HepG2 (cell line): ENCODE measurements at regions of chr15 and their contacts with region 1.

Region 1: GRCh38 chr15:74781431-74782258 is at the start of gene CSK:
- DNase-seq: no peak
- ATAC-seq: peak; percentile 4
- H3K4me3 ChIP-seq: peak within 1 kb of the TSS; percentile 66 to 84 (median 69)
- H3K27ac ChIP-seq: peak within 1 kb of the TSS; percentile 45
- H3K4me1 ChIP-seq: peaks cover 79% of the 10 kb centered on the region
- H3K27me3 ChIP-seq: no peaks in the 10 kb centered on the region
- CTCF ChIP-seq: peak; percentile 57
- EP300 ChIP-seq: no peak
- POLR2A ChIP-seq: peak in 1 of 2 experiments; percentile 62; a peak in 2 of 4 replicates
- RAD21 ChIP-seq: 0 out of 2 replicates have a peak, but pooled peaks have one; percentile 25
- total RNA-seq, gene CSK: 20.6 and 21.3 TPM in 2 replicates

Region 2: DNA sequence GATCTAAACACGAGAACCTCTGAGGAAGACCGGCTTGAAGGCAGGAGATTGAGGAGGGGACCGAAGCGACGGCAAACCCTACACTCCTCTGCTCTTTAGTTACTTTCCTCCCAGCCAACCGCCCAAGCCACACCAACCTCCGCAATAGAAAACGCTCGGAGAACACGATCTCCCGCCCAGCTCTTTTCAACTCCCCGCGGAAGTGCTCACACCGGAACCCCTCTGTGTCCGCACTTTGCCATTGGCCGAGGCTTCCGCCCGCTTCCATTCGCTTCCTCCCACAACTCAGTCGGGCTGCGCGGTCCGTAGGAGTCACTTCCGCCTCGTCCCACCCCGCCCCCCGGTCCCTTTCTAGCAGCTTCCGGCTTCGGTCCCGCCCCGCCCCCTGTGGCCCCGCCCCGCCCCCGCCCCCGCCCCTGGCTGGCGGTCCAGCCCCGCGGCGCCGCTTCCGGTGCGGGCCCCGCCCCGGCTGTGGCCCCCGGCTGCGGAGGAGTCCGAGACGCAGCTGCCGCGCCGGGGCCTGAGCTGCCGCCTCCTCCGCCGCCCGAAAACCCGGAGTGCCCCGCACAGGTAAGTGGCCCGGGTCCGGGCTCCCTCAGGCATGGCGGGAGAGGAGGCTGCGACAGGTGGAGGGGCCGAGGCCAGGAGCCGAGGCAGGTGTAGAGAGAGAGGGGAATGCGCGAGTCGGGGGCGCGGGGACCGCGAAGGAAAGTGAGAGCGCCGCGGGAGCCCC is 240.7 kb before region 1 on chr15 and contains the start of gene ARID3B:
- CTCF ChIA-PET with region 1: no interaction called
- POLR2A ChIA-PET with region 1: no interaction called
- in situ Hi-C with region 1: loop called (anchors 10 kb)
- intact Hi-C with region 1: no loop called
- DNase-seq: peak; percentile 94
- ATAC-seq: peak; percentile 99
- H3K4me3 ChIP-seq: peak within 1 kb of the TSS; percentile 97 to 99 (median 98)
- H3K27ac ChIP-seq: peak within 1 kb of the TSS; percentile 80
- H3K4me1 ChIP-seq: peaks cover 37% of the 10 kb centered on the region
- H3K27me3 ChIP-seq: no peaks in the 10 kb centered on the region; a peak in 1 of 5 replicates
- CTCF ChIP-seq: no peak
- EP300 ChIP-seq: no peak
- POLR2A ChIP-seq: peak; percentile 68 to 92
- RAD21 ChIP-seq: peak; percentile 6; the same call in 1 of the 2 replicates
- total RNA-seq, gene ARID3B: 5.3 and 7.0 TPM in 2 replicates

Region 3: GRCh38 chr15:74664028-74664616 is 117.5 kb before region 1 on chr15:
- CTCF ChIA-PET with region 1: no interaction called
- POLR2A ChIA-PET with region 1: no interaction called
- in situ Hi-C with region 1: no loop called
- intact Hi-C with region 1: no loop called
- DNase-seq: peak; percentile 20
- ATAC-seq: peak; percentile 75
- H3K4me3 ChIP-seq: no peak overlapping the region
- H3K27ac ChIP-seq: peak overlapping the region; percentile 43
- H3K4me1 ChIP-seq: peaks cover 21% of the 10 kb centered on the region
- H3K27me3 ChIP-seq: no peaks in the 10 kb centered on the region
- CTCF ChIP-seq: no peak
- EP300 ChIP-seq: no peak
- POLR2A ChIP-seq: no peak
- RAD21 ChIP-seq: no peak

Region 4: DNA sequence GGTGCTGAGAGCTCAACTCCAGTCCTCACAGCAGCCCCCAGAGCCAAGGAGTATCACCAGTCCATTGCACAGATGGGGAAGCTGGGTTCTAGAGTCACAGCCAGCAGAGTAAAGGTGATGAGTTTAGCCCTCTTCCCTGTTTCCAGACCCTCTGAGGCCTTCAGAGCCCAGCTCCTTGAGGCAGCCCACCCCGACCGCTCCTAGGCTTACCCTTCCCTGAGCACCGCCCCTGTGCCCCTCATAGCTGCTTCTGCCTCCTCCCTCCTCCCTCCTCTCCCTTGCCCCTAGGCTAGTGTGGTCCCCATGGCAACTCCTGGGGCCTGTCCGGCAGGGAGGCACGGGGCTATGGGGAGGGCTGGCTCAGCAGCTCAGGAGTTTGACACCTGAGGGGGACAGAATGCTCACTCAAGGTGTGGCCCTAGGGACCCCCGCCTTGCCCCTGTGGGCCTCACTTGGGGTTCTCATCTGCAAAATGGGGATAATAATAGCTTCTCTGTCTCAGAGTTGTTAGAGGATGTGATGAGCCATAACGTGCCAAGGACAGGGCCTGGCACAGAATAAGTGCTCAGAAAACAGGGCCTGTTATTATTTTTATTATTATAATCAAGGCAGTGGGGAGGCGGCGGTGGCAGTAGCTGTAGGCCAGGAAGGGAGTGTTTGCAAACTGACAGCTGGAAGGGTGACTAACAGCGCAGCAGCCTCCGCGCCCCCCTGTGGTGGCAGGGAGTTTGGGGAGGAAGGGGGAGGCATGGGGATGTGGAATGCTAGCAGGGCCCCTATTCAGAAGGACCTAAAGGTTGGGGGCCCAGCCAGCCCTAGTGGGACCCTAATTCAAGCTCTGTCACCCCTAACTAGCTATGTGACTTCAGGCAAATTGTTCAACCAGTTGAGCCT is 11.7 kb after region 1 on chr15:
- CTCF ChIA-PET with region 1: no interaction called
- POLR2A ChIA-PET with region 1: interaction called, 13 read pairs
- in situ Hi-C with region 1: no loop called
- intact Hi-C with region 1: no loop called
- DNase-seq: no peak
- ATAC-seq: no peak
- H3K4me3 ChIP-seq: no peak overlapping the region
- H3K27ac ChIP-seq: no peak overlapping the region
- H3K4me1 ChIP-seq: peaks cover 15% of the 10 kb centered on the region
- H3K27me3 ChIP-seq: no peaks in the 10 kb centered on the region
- CTCF ChIP-seq: no peak
- EP300 ChIP-seq: no peak
- POLR2A ChIP-seq: no peak
- RAD21 ChIP-seq: no peak

Region 5: DNA sequence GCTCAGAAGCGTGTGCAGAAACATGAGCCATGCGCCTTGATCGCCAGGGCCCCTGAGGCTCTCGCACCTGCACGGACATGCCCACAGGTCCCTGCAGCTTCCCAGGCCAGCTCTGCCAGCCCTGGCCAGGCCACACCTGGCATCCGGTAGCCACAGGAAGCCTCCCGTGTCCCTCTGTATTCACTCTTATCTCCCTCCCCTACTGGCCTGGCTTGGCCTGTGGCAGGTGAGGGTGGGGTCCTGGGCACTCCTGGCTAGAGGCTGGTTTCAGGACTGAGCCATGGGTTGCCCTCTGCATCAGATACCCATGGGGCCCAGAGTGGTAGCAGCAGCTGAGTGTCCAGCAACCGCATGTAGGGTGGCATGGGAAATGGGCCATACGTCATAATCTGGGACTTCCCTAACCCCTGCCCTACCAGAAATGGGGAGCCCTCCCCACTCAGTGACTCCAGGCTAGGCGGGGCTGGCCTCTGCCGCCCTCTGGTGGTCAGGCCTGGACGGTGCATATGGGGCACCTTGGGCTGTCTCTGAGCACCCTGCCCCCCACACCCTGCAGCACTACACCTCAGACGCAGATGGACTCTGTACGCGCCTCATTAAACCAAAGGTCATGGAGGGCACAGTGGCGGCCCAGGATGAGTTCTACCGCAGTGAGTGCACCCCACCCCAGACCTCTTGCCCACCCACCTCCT is 18.4 kb after region 1 on chr15:
- CTCF ChIA-PET with region 1: interaction called, 6 read pairs
- POLR2A ChIA-PET with region 1: interaction called, 13 read pairs
- in situ Hi-C with region 1: no loop called
- intact Hi-C with region 1: loop called (anchors 2 kb)
- DNase-seq: peak; percentile 43
- ATAC-seq: peak; percentile 92
- H3K4me3 ChIP-seq: no peak overlapping the region
- H3K27ac ChIP-seq: no peak overlapping the region
- H3K4me1 ChIP-seq: peaks cover 13% of the 10 kb centered on the region
- H3K27me3 ChIP-seq: no peaks in the 10 kb centered on the region
- CTCF ChIP-seq: peak; percentile 97
- EP300 ChIP-seq: no peak
- POLR2A ChIP-seq: no peak; a peak in 1 of 4 replicates
- RAD21 ChIP-seq: peak; percentile 96

Region 6: DNA sequence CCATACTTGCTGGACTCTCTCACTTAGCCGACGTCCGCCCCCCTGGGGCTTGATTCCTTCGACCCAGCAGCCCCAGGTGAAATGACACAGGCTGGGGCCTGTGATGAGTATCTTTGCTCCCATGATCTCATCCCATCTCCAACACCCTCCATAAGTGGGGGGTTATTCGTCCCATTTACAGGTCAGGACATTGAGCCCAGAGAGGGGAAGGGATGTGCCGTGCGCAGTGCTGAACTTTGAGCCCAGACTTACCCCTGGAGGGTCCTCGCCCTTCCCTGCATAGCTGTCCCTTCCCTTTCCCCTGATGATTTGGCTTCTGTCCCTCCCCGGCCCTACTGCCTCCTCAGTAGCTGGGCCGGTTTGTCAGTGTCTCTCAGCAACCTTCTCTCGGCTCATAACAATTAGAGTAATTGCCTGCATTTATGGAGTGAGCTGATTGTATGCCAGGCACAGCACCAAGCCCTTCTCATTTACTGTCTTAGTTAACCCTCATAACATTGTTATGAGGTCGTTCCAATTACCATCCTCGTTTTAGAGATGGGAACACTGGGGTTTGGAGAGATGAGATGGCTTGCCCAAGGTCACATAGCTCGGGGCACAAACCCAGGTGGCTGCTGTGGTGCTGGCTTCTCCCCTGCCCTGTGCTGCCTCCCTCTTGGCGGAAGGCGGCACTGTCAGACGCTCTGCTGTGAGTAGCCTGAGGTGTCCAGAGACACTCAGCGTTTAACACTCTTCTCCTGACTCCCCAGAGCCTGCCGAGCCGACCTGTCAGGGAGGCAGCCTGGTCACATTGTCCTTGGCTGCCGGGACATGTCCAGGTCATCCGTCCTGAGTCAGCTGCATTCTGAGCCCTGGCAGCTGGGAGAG is 35.4 kb after region 1 on chr15:
- CTCF ChIA-PET with region 1: no interaction called
- POLR2A ChIA-PET with region 1: interaction called, 3 read pairs
- in situ Hi-C with region 1: no loop called
- intact Hi-C with region 1: loop called (anchors 5 kb)
- DNase-seq: peak; percentile 56
- ATAC-seq: peak; percentile 84
- H3K4me3 ChIP-seq: peak overlapping the region in 1 of 3 experiments; percentile 35; a peak in 1 of 6 replicates
- H3K27ac ChIP-seq: no peak overlapping the region
- H3K4me1 ChIP-seq: peaks cover 40% of the 10 kb centered on the region
- H3K27me3 ChIP-seq: peaks cover 1 to 8% of the 10 kb centered on the region in 2 experiments; a peak in 2 of 5 replicates
- CTCF ChIP-seq: peak; percentile 82
- EP300 ChIP-seq: no peak
- POLR2A ChIP-seq: no peak
- RAD21 ChIP-seq: peak; percentile 46; the same call in 1 of the 2 replicates

Region 7: GRCh38 chr15:74835307-74835823 is 53.7 kb after region 1 on chr15:
- CTCF ChIA-PET with region 1: no interaction called
- POLR2A ChIA-PET with region 1: no interaction called
- in situ Hi-C with region 1: no loop called
- intact Hi-C with region 1: loop called (anchors 2 kb)
- DNase-seq: peak; percentile 70
- ATAC-seq: peak; percentile 86
- H3K4me3 ChIP-seq: no peak overlapping the region
- H3K27ac ChIP-seq: no peak overlapping the region
- H3K4me1 ChIP-seq: peaks cover 30% of the 10 kb centered on the region
- H3K27me3 ChIP-seq: peaks cover 0 to 11% of the 10 kb centered on the region in 2 experiments; a peak in 2 of 5 replicates
- CTCF ChIP-seq: peak; percentile 82
- EP300 ChIP-seq: no peak
- POLR2A ChIP-seq: no peak
- RAD21 ChIP-seq: peak; percentile 59

Region 8: GRCh38 chr15:74873036-74873755 is 91.6 kb after region 1 on chr15 and contains the start of gene SCAMP2:
- CTCF ChIA-PET with region 1: no interaction called
- POLR2A ChIA-PET with region 1: no interaction called
- in situ Hi-C with region 1: no loop called
- intact Hi-C with region 1: no loop called
- DNase-seq: peak; percentile 91
- ATAC-seq: peak; percentile 98
- H3K4me3 ChIP-seq: peak within 1 kb of the TSS; percentile 83 to 98 (median 98)
- H3K27ac ChIP-seq: peak within 1 kb of the TSS; percentile 93
- H3K4me1 ChIP-seq: peaks cover 48% of the 10 kb centered on the region
- H3K27me3 ChIP-seq: peaks cover 0 to 10% of the 10 kb centered on the region in 2 experiments; a peak in 1 of 5 replicates
- CTCF ChIP-seq: no peak
- EP300 ChIP-seq: 0 out of 4 replicates have a peak, but pooled peaks of 1 of the 2 experiments have one; percentile 40
- POLR2A ChIP-seq: peak; percentile 92 to 93
- RAD21 ChIP-seq: peak; percentile 27; the same call in 1 of the 2 replicates
- total RNA-seq, gene SCAMP2: 23.6 and 34.8 TPM in 2 replicates

Region 9: DNA sequence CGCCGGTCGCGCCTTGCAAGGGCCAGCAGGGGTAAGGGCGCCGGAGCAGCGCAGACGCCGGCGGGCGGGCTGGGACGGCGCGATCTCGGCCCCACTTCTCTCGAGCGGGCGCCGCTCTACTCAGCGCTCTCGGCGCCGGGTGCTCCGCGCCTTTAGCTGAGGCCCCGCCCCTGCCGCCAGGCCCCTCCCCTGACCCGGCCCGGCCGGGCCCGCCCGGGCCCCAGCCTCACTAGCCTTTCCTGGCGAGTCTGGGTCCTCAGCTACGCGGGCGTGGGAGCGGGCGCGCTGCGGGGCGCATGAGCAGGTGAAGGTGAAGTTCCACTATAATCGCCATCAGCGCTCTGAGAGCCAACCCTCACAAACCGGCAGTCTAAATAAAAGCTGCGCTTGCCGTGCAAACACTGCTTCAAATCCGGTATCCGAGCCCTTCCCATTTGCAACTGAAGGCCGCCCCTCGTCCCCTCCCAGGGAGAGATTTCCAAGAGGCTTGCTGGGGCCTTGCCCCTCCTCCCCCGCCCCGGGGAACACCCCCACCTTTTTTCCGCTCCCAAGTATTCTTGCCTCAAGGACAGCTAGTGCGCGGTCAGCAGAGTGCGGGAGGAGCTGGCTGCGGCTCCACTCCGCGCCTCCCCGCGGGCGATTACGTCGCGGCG is 175.1 kb after region 1 on chr15 and contains the start of gene RPP25:
- CTCF ChIA-PET with region 1: no interaction called
- POLR2A ChIA-PET with region 1: no interaction called
- in situ Hi-C with region 1: loop called (anchors 10 kb)
- intact Hi-C with region 1: no loop called
- DNase-seq: peak; percentile 27
- ATAC-seq: peak; percentile 84
- H3K4me3 ChIP-seq: peak within 1 kb of the TSS; percentile 60 to 78 (median 63)
- H3K27ac ChIP-seq: no peak within 1 kb of the TSS
- H3K4me1 ChIP-seq: peaks cover 18% of the 10 kb centered on the region
- H3K27me3 ChIP-seq: peaks cover 5 to 56% of the 10 kb centered on the region in 2 experiments; a peak in 4 of 5 replicates
- CTCF ChIP-seq: no peak
- EP300 ChIP-seq: no peak
- POLR2A ChIP-seq: no peak; a peak in 1 of 4 replicates
- RAD21 ChIP-seq: no peak
- total RNA-seq, gene RPP25: 0.08 and 0.11 TPM in 2 replicates

Region 10: GRCh38 chr15:75023181-75023871 is 241.7 kb after region 1 on chr15 and contains the start of gene PPCDC:
- CTCF ChIA-PET with region 1: no interaction called
- POLR2A ChIA-PET with region 1: no interaction called
- in situ Hi-C with region 1: no loop called
- intact Hi-C with region 1: no loop called
- DNase-seq: peak; percentile 94
- ATAC-seq: peak; percentile 98
- H3K4me3 ChIP-seq: peak within 1 kb of the TSS; percentile 87 to 95 (median 94)
- H3K27ac ChIP-seq: peak within 1 kb of the TSS; percentile 80
- H3K4me1 ChIP-seq: peaks cover 25% of the 10 kb centered on the region
- H3K27me3 ChIP-seq: no peaks in the 10 kb centered on the region
- CTCF ChIP-seq: no peak
- EP300 ChIP-seq: 0 out of 4 replicates have a peak, but pooled peaks of 1 of the 2 experiments have one; percentile 37
- POLR2A ChIP-seq: peak; percentile 95 to 98
- RAD21 ChIP-seq: peak; percentile 45
- total RNA-seq, gene PPCDC: 9.9 and 12.3 TPM in 2 replicates

Region 11: DNA sequence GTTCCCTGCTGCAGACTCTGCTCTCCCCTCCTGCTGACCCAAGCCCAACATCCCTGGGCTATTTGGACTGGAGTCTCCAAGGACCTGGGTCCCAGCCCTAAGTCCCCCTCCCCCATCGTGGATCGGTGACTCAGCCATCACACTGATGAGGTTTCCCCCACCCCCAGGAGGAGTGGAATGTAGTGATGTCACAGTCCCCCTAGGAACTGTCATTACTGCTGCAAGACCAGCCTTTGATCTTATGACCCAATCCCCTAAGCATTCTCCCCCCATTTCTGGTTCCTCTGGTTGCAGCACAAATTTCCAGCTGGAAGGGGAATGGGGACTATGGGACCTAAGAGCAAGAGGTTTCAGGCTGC is 994.4 kb after region 1 on chr15:
- CTCF ChIA-PET with region 1: no interaction called
- POLR2A ChIA-PET with region 1: no interaction called
- in situ Hi-C with region 1: no loop called
- intact Hi-C with region 1: no loop called
- DNase-seq: peak; percentile 64
- ATAC-seq: no peak
- H3K4me3 ChIP-seq: peak overlapping the region in 1 of 3 experiments; percentile 28; a peak in 1 of 6 replicates
- H3K27ac ChIP-seq: peak overlapping the region; percentile 46
- H3K4me1 ChIP-seq: peaks cover 69% of the 10 kb centered on the region
- H3K27me3 ChIP-seq: peaks cover 0 to 1% of the 10 kb centered on the region in 2 experiments; a peak in 1 of 5 replicates
- CTCF ChIP-seq: no peak
- EP300 ChIP-seq: peak in 1 of 2 experiments; percentile 56; a peak in 2 of 4 replicates
- POLR2A ChIP-seq: no peak
- RAD21 ChIP-seq: no peak